ENCODE measurements at regions of chr6 and their contacts with region 1.

Region 1: GRCh38 chr6:28136585-28137504 is 4.8 kb upstream of the ZKSCAN8 start:
- DNase-seq: peak; percentile 69
- ATAC-seq: peak; percentile 42
- H3K4me3 Mint-ChIP-seq: peak overlapping the region; percentile 98
- H3K27ac Mint-ChIP-seq: peak overlapping the region; percentile 100
- H3K4me1 Mint-ChIP-seq: peaks cover 76% of the 10 kb centered on the region
- H3K27me3 Mint-ChIP-seq: no peaks in the 10 kb centered on the region
- CTCF ChIP-seq: no peak

Region 2: GRCh38 chr6:27687154-27688013 is 449.5 kb before region 1 on chr6:
- CTCF ChIA-PET with region 1: no interaction called
- POLR2A ChIA-PET with region 1: no interaction called
- intact Hi-C with region 1: loop called (anchors 1 kb)
- DNase-seq: peak; percentile 63
- ATAC-seq: peak; percentile 73
- H3K4me3 Mint-ChIP-seq: peak overlapping the region; percentile 93
- H3K27ac Mint-ChIP-seq: peak overlapping the region; percentile 90
- H3K4me1 Mint-ChIP-seq: peaks cover 16% of the 10 kb centered on the region
- H3K27me3 Mint-ChIP-seq: peaks cover 4% of the 10 kb centered on the region
- CTCF ChIP-seq: no peak

Region 3: GRCh38 chr6:28124102-28124970 is 12.5 kb before region 1 on chr6 and contains the start of gene ZSCAN16:
- CTCF ChIA-PET with region 1: no interaction called
- POLR2A ChIA-PET with region 1: interaction called, 170 read pairs
- intact Hi-C with region 1: loop called (anchors 1 kb)
- DNase-seq: peak; percentile 72
- ATAC-seq: peak; percentile 96
- H3K4me3 Mint-ChIP-seq: peak within 1 kb of the TSS; percentile 97
- H3K27ac Mint-ChIP-seq: peak within 1 kb of the TSS; percentile 95
- H3K4me1 Mint-ChIP-seq: peaks cover 27% of the 10 kb centered on the region
- H3K27me3 Mint-ChIP-seq: no peaks in the 10 kb centered on the region
- CTCF ChIP-seq: no peak
- total RNA-seq, gene ZSCAN16: 10.6 and 12.6 TPM in 2 replicates

Region 4: DNA sequence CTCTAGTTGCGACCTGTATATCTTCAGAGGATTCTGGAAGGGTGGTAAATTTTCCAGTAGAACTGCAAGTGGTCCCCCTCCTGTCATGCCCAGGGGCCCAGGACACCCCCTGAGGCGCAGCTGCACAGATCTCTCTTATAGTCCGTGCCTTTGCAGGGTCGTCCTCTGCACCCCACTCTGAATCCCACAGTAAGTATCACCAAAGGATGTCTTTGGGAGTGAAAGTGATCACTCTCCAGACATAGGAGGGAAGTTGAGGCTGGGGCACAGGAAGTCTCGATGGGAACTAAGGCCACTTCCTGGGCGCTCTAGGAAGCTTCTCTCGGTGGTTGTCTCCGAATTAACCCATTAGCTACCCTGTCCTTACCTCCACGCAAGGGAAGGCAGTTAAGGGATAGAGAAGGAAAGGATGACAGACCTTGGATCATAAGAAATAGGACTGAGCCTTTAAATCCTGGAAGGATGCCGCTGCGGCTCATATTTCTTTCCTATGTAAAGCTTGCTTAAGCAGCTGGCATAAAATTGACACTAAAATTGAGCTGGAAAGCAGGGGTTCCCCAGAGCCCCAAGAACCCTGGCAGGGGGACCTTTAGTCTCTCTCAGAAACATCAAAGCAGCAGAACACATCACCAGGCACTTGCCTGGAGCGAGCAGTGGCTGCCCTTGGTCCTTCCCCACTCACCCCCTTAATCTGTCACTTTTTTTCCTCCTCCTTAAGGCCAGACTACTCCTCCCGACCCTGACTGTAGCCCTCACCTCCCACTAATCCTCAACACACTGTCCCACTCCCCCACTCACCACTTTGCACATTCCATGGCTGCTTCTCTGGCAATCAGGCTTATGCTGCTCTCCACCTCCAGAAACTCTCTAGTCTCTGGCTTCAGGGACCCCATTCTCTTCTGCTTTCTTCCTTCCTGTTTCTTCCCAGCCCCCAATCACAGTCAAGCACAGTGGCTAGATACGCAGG is 115.4 kb after region 1 on chr6 and contains the start of gene ZKSCAN4:
- CTCF ChIA-PET with region 1: interaction called, 4 read pairs
- POLR2A ChIA-PET with region 1: interaction called, 40 read pairs
- intact Hi-C with region 1: loop called (anchors 1 kb)
- DNase-seq: peak; percentile 57
- ATAC-seq: peak; percentile 90
- H3K4me3 Mint-ChIP-seq: peak within 1 kb of the TSS; percentile 95
- H3K27ac Mint-ChIP-seq: peak within 1 kb of the TSS; percentile 80
- H3K4me1 Mint-ChIP-seq: peaks cover 30% of the 10 kb centered on the region
- H3K27me3 Mint-ChIP-seq: peaks cover 2% of the 10 kb centered on the region
- CTCF ChIP-seq: no peak
- total RNA-seq, gene ZKSCAN4: 10.5 and 11.1 TPM in 2 replicates

Region 5: GRCh38 chr6:28355743-28356665 is 219.2 kb after region 1 on chr6:
- CTCF ChIA-PET with region 1: interaction called, 23 read pairs
- POLR2A ChIA-PET with region 1: interaction called, 19 read pairs
- intact Hi-C with region 1: loop called (anchors 1 kb)
- DNase-seq: peak; percentile 41
- ATAC-seq: peak; percentile 85
- H3K4me3 Mint-ChIP-seq: peak overlapping the region; percentile 91
- H3K27ac Mint-ChIP-seq: peak overlapping the region; percentile 71
- H3K4me1 Mint-ChIP-seq: peaks cover 21% of the 10 kb centered on the region
- H3K27me3 Mint-ChIP-seq: no peaks in the 10 kb centered on the region
- CTCF ChIP-seq: peak; percentile 82

Region 6: DNA sequence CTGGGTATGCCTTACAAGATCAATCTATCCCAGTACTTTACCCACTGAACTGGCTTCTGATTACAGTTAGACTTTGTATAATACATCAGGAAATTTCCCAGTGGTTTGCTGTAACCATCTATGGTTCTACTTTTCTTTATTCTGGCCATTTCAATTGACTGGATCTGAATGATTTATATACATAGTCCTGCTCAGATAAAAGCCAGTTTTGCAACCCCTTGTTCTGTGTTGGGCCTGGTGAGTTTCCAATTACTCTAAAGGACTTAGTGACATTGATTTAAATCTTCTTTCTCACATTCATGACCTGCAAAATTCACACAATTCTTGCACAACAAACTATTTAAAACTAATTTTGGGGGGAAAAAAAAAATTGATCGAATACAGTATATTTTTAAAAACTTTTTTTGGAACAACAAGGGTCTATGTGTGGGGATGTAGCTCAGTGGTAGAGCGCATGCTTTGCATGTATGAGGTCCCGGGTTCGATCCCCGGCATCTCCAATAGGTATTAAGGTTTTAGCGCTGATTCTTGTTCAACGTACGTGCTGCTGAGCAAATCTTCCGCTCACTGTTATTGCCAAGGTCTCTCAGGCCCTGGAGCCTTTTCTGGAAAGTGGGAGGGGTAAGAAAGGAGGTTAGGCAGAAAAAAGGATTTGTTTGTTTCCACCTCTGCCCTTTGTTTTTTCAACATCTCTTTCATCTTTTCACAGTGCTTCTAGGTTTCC is 506.3 kb after region 1 on chr6:
- CTCF ChIA-PET with region 1: no interaction called
- POLR2A ChIA-PET with region 1: no interaction called
- intact Hi-C with region 1: no loop called
- DNase-seq: no peak
- ATAC-seq: no peak
- H3K4me3 Mint-ChIP-seq: no peak overlapping the region
- H3K27ac Mint-ChIP-seq: no peak overlapping the region
- H3K4me1 Mint-ChIP-seq: peaks cover 2% of the 10 kb centered on the region
- H3K27me3 Mint-ChIP-seq: peaks cover 37% of the 10 kb centered on the region
- CTCF ChIP-seq: no peak

Region 7: GRCh38 chr6:29834564-29835436 is 1698.0 kb after region 1 on chr6:
- CTCF ChIA-PET with region 1: no interaction called
- POLR2A ChIA-PET with region 1: no interaction called
- intact Hi-C with region 1: no loop called
- DNase-seq: peak; percentile 45
- ATAC-seq: peak; percentile 40
- H3K4me3 Mint-ChIP-seq: no peak overlapping the region
- H3K27ac Mint-ChIP-seq: no peak overlapping the region
- H3K4me1 Mint-ChIP-seq: no peaks in the 10 kb centered on the region
- H3K27me3 Mint-ChIP-seq: peaks cover 67% of the 10 kb centered on the region
- CTCF ChIP-seq: no peak